ENCODE measurements at regions of chr1 and their contacts with region 1.

Region 1: DNA sequence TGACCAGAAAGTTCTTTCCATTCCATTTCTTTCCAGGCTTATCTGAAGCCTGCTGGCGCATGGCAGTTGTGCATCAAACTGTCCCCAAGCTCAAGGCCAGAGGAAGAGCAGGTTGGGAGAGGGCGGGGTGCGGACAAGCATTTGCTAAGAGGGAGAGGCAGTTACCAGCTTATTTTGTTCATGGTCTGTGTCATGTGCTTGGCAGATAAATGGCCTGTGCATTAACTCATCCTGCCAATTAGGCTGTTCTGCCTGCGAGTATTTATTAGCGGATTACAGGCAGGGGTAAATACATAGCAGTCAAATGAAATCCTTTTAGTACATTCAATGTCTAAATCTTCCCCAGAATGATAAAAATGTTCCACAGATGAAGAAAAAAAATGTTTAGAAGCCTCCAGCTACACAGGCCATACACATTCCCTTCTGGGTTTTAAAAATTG is 48.9 kb upstream of the B3GALNT2 start:
- DNase-seq: no peak
- H3K4me3 Mint-ChIP-seq: no peak overlapping the region
- H3K27ac Mint-ChIP-seq: no peak overlapping the region
- H3K4me1 Mint-ChIP-seq: no peaks in the 10 kb centered on the region
- H3K27me3 Mint-ChIP-seq: no peaks in the 10 kb centered on the region
- CTCF ChIP-seq: no peak

Region 2: GRCh38 chr1:234851450-234852438 is 701.4 kb before region 1 on chr1:
- CTCF ChIA-PET with region 1: no interaction called
- POLR2A ChIA-PET with region 1: no interaction called
- intact Hi-C with region 1: no loop called
- DNase-seq: peak; percentile 45
- H3K4me3 Mint-ChIP-seq: no peak overlapping the region
- H3K27ac Mint-ChIP-seq: no peak overlapping the region
- H3K4me1 Mint-ChIP-seq: peaks cover 19% of the 10 kb centered on the region
- H3K27me3 Mint-ChIP-seq: no peaks in the 10 kb centered on the region
- CTCF ChIP-seq: no peak

Region 3: DNA sequence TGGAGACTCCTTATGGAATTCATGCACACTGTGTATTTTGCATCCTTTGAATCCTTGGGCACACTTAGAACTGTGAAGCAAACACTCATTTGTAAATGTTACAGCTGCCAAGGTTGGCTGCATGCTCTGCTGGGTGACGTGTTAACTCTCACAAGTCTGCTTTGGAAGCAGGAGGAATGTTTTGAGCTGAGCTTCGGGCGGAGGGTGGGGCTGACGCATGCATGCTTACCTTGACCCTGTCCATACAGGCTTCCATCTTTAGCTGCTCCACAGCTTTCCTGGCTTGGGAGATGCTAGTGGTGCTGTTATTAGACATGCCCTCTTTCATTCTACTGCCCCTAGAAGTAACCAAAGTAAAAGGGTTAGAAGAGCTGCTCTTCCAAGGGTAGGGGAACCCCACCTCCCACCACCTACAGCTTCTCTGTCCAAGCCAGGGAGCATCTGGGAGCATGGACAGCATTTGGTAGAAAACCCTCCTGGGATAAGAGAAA is 30.4 kb after region 1 on chr1:
- CTCF ChIA-PET with region 1: interaction called, 18 read pairs
- POLR2A ChIA-PET with region 1: no interaction called
- intact Hi-C with region 1: no loop called
- DNase-seq: no peak
- H3K4me3 Mint-ChIP-seq: no peak overlapping the region
- H3K27ac Mint-ChIP-seq: no peak overlapping the region
- H3K4me1 Mint-ChIP-seq: peaks cover 4% of the 10 kb centered on the region
- H3K27me3 Mint-ChIP-seq: no peaks in the 10 kb centered on the region
- CTCF ChIP-seq: no peak

Measured in MCF 10A (cell line).